Aorta (tissue), 5 donors: ENCODE measurements at regions of chr5 and their contacts with region 1.

Region 1: GRCh38 chr5:169003721-169004541 is 297.0 kb downstream of the SLIT3 start:
- DNase-seq: no peak
- ATAC-seq: peak; percentile 35
- H3K4me3 ChIP-seq: no peak overlapping the region
- H3K27ac ChIP-seq: no peak overlapping the region
- H3K4me1 ChIP-seq: no peaks in the 10 kb centered on the region
- H3K27me3 ChIP-seq: no peaks in the 10 kb centered on the region

Region 2: GRCh38 chr5:168843277-168844015 is 160.5 kb before region 1 on chr5:
- intact Hi-C with region 1: no loop called
- DNase-seq: no peak
- ATAC-seq: peak; percentile 13
- H3K4me3 ChIP-seq: no peak overlapping the region
- H3K27ac ChIP-seq: no peak overlapping the region
- H3K4me1 ChIP-seq: peaks cover 0 to 7% of the 10 kb centered on the region in 2 donors
- H3K27me3 ChIP-seq: no peaks in the 10 kb centered on the region

Region 3: DNA sequence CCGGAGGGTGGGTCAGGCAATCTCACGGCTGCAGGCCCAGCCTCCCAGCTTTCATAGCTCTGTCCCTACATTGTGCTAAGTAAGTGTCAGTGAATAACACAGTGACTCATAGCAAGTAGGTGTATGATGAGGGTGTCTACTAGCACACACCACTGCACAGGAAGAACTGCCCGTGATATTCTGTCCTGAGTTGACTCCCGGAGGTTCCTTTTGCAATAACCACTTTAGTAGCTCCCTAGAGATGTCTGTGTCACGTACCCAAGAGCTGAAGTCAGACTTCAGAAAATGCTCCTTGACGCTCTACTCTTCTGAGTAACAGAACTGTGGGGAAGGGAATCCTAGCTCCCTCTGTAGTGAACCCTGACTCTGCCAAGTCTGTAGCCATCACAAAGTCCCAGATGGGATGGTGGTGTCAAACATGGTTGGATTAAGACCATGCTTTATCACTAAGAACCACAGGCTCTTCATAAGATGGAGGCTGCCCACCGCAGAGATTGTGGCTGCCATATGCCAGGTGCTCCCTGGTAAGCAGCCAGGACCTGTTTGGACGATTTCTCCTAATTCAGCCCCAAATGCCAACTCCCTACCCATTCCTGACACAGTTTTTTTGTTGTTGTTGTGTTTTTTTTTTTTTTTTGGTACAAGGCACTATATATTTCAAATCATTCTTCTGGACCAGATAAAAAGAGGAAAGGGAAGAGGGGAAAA is 72.1 kb before region 1 on chr5:
- intact Hi-C with region 1: no loop called
- DNase-seq: no peak
- ATAC-seq: peak; percentile 58
- H3K4me3 ChIP-seq: no peak overlapping the region
- H3K27ac ChIP-seq: no peak overlapping the region
- H3K4me1 ChIP-seq: no peaks in the 10 kb centered on the region
- H3K27me3 ChIP-seq: no peaks in the 10 kb centered on the region

Region 4: DNA sequence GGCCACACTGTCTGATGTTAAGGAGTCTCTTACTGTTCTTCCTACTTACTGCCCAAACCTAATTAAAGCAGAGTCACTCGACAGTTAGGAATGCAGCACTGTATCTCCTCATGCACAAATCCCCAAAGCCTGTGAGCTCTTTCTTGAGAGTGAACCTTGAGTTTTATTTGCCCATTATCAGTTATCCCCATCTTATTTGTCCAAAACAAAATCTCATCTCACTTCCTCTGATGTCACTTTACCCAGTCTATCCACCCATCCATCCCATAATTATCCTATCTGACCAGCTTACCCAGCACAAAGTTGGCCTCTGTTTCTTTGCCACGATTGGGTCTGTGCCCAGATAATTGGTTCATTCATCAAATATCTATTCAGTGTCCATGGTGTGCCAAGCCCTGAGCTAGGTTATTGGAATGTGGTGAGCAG is 46.2 kb after region 1 on chr5:
- intact Hi-C with region 1: loop called in 1 of 2 experiments (anchors 5 kb)
- DNase-seq: no peak
- ATAC-seq: no peak
- H3K4me3 ChIP-seq: peak overlapping the region; percentile 21 to 28
- H3K27ac ChIP-seq: no peak overlapping the region
- H3K4me1 ChIP-seq: peaks cover 4 to 9% of the 10 kb centered on the region in 2 donors
- H3K27me3 ChIP-seq: no peaks in the 10 kb centered on the region

Region 5: DNA sequence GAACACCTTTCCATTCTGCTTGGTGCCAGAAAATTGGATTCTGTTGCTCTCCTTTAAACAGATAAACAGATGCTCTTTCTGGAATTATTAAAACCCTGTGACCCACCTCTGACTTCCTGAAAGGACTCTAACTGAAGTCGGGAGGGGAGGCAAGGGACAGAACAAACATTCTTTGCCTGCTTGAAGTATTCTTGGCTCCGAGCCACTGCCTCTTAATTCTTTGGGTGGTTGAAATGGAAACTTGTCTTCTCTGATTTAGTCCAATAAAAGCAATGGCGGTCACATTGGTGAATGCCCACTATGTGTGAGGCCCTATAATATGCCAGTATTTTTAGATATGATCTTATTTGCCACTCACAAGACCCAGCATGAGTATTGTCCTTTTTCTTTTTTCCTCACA is 60.2 kb after region 1 on chr5:
- intact Hi-C with region 1: loop called in 1 of 2 experiments (anchors 10 kb)
- DNase-seq: peak in 1 of 2 donors; percentile 55
- ATAC-seq: peak; percentile 28
- H3K4me3 ChIP-seq: no peak overlapping the region
- H3K27ac ChIP-seq: no peak overlapping the region
- H3K4me1 ChIP-seq: peaks cover 10 to 17% of the 10 kb centered on the region in 2 donors
- H3K27me3 ChIP-seq: no peaks in the 10 kb centered on the region